IMR-90 (cell line): ENCODE measurements at regions of chr1 and their contacts with region 1.

Region 1: DNA sequence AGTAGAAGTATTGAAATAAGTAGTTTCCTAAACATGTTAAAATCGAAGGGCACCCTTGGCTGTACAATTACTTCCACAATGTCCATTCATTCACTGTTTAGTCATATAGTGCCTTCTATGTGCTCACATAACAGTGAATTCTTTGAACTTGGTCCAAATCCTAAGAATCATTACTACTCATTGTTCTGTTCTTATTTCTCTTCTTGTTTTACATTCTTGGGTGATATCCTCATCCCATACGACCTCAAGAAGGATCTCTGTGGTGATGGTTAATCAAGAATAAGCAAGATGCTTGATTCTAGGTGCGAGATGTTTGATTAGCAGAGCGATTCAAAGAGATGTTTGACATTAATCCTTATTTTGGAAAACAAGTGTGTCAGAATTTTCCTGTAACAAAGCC is 667.4 kb upstream of the ZP4 start:
- DNase-seq: peak; percentile 81
- ATAC-seq: no peak
- H3K4me3 ChIP-seq: no peak overlapping the region
- H3K27ac ChIP-seq: no peak overlapping the region
- H3K4me1 ChIP-seq: no peaks in the 10 kb centered on the region
- H3K27me3 ChIP-seq: no peaks in the 10 kb centered on the region
- CTCF ChIP-seq: no peak
- POLR2A ChIP-seq: no peak
- RAD21 ChIP-seq: no peak

Region 2: GRCh38 chr1:237998581-237998980 is 559.6 kb before region 1 on chr1:
- CTCF ChIA-PET with region 1: no interaction called
- POLR2A ChIA-PET with region 1: no interaction called
- dilution Hi-C with region 1: no loop called
- in situ Hi-C with region 1: no loop called
- intact Hi-C with region 1: no loop called
- DNase-seq: no peak
- ATAC-seq: no peak
- H3K4me3 ChIP-seq: no peak overlapping the region
- H3K27ac ChIP-seq: no peak overlapping the region
- H3K4me1 ChIP-seq: no peaks in the 10 kb centered on the region
- H3K27me3 ChIP-seq: no peaks in the 10 kb centered on the region
- CTCF ChIP-seq: no peak
- POLR2A ChIP-seq: no peak
- RAD21 ChIP-seq: no peak

Region 3: DNA sequence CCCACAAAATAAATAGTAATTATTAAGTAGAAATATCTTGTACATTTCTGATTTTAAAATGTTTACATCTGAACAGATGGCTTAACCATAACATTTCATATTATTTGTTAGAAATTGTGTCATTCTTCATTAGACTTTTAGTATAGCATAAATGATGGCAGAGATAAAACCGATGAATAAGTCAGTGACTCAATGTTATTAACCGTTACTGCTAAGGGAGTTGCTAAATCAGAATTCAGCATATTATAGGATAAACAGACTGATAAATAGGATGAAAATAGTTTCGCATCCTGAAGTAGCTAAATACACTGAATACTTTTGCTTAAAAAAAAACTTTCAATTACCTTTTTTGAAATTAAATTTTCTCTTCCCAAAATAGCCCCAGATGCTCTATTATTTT is 56.9 kb before region 1 on chr1:
- CTCF ChIA-PET with region 1: no interaction called
- POLR2A ChIA-PET with region 1: interaction called, 17 read pairs
- dilution Hi-C with region 1: no loop called
- in situ Hi-C with region 1: no loop called
- intact Hi-C with region 1: no loop called
- DNase-seq: peak; percentile 42
- ATAC-seq: peak; percentile 54; the same call in 1 of the 2 replicates
- H3K4me3 ChIP-seq: no peak overlapping the region
- H3K27ac ChIP-seq: no peak overlapping the region
- H3K4me1 ChIP-seq: no peaks in the 10 kb centered on the region
- H3K27me3 ChIP-seq: no peaks in the 10 kb centered on the region
- CTCF ChIP-seq: no peak
- POLR2A ChIP-seq: no peak
- RAD21 ChIP-seq: no peak